Naive thymus-derived CD4-positive, alpha-beta T cell (primary cell): ENCODE measurements at regions of chr16 and their contacts with region 1.

Region 1: DNA sequence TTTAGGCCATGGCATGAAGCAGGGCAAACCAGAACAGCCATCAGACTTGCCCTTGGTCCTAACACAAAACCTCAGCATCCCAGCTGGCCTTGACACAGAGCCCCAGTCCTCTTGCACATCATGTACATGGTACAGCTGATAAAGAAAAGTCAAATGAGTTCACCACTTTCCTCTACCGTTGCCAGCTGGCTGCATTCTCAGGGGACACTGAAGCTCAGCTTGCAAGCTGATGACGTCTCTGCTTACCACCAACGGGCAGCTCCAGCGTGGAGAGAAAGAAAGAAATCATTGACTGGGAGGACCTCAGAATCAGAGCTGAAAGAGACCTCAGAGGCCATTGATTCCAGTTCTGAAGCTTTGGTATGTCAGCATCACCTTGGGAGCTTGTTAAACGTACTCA is 80.7 kb upstream of the CES5A start:
- DNase-seq: no peak
- ATAC-seq: no peak
- H3K4me3 ChIP-seq: no peak overlapping the region
- H3K4me3 Mint-ChIP-seq: no peak overlapping the region
- H3K27ac ChIP-seq: no peak overlapping the region
- H3K27ac Mint-ChIP-seq: no peak overlapping the region
- H3K4me1 ChIP-seq: no peaks in the 10 kb centered on the region
- H3K4me1 Mint-ChIP-seq: no peaks in the 10 kb centered on the region
- H3K27me3 ChIP-seq: no peaks in the 10 kb centered on the region
- H3K27me3 Mint-ChIP-seq: peaks cover 9 to 41% (median 16%) of the 10 kb centered on the region in 5 donors

Region 2: GRCh38 chr16:55971447-55971846 is 15.6 kb after region 1 on chr16:
- CTCF ChIA-PET with region 1: no interaction called
- POLR2A ChIA-PET with region 1: no interaction called
- intact Hi-C with region 1: loop called in 1 of 2 experiments (anchors 1 kb)
- DNase-seq: no peak
- ATAC-seq: no peak
- H3K4me3 ChIP-seq: no peak overlapping the region
- H3K4me3 Mint-ChIP-seq: no peak overlapping the region
- H3K27ac ChIP-seq: no peak overlapping the region
- H3K27ac Mint-ChIP-seq: no peak overlapping the region
- H3K4me1 ChIP-seq: no peaks in the 10 kb centered on the region
- H3K4me1 Mint-ChIP-seq: no peaks in the 10 kb centered on the region
- H3K27me3 ChIP-seq: no peaks in the 10 kb centered on the region
- H3K27me3 Mint-ChIP-seq: peaks cover 4 to 21% (median 17%) of the 10 kb centered on the region in 5 donors

Region 3: GRCh38 chr16:55989565-55989900 is 33.7 kb after region 1 on chr16:
- CTCF ChIA-PET with region 1: no interaction called
- POLR2A ChIA-PET with region 1: no interaction called
- intact Hi-C with region 1: no loop called
- DNase-seq: no peak
- ATAC-seq: no peak
- H3K4me3 ChIP-seq: no peak overlapping the region
- H3K4me3 Mint-ChIP-seq: no peak overlapping the region
- H3K27ac ChIP-seq: no peak overlapping the region
- H3K27ac Mint-ChIP-seq: no peak overlapping the region
- H3K4me1 ChIP-seq: no peaks in the 10 kb centered on the region
- H3K4me1 Mint-ChIP-seq: no peaks in the 10 kb centered on the region
- H3K27me3 ChIP-seq: no peaks in the 10 kb centered on the region
- H3K27me3 Mint-ChIP-seq: peaks cover 0 to 29% (median 20%) of the 10 kb centered on the region in 5 donors

Region 4: DNA sequence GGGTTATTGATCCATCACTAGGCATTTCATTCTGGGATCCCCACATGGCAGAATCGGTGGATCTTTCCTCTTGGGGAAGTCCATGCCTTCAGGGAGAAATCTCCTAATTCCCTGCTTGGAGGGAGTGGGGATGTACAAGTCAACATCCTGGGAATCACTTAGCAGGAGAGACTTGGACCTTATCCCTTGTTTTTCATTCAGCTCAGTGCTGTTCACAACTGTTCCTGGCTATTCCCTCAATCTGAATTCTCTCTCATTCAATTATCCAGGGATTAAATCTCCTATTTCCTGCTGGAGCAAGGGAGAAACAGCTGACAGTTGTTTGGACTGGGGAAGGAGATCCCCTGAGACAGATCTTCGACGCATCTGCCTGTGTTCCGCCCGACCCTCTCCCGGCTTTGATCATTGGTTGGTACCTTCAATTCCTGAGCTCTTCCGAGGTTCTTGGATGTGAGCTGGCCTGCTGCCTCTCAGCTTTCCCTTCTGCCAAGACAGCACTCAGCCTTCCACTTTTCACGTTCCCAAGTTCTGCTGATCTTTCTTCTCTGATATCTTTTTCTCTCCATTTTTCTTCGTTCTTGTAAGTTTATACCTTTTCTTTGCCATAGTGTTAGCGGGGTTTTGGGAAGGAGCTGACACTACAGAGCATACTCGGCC is 120.0 kb after region 1 on chr16:
- CTCF ChIA-PET with region 1: no interaction called
- POLR2A ChIA-PET with region 1: no interaction called
- intact Hi-C with region 1: no loop called
- DNase-seq: no peak
- ATAC-seq: no peak
- H3K4me3 ChIP-seq: no peak overlapping the region
- H3K4me3 Mint-ChIP-seq: no peak overlapping the region
- H3K27ac ChIP-seq: no peak overlapping the region
- H3K27ac Mint-ChIP-seq: no peak overlapping the region
- H3K4me1 ChIP-seq: no peaks in the 10 kb centered on the region
- H3K4me1 Mint-ChIP-seq: no peaks in the 10 kb centered on the region
- H3K27me3 ChIP-seq: no peaks in the 10 kb centered on the region
- H3K27me3 Mint-ChIP-seq: peaks cover 0 to 31% (median 18%) of the 10 kb centered on the region in 5 donors